Mammary epithelial cell (primary cell): ENCODE measurements at regions of chr1 and their contacts with region 1.

Region 1: DNA sequence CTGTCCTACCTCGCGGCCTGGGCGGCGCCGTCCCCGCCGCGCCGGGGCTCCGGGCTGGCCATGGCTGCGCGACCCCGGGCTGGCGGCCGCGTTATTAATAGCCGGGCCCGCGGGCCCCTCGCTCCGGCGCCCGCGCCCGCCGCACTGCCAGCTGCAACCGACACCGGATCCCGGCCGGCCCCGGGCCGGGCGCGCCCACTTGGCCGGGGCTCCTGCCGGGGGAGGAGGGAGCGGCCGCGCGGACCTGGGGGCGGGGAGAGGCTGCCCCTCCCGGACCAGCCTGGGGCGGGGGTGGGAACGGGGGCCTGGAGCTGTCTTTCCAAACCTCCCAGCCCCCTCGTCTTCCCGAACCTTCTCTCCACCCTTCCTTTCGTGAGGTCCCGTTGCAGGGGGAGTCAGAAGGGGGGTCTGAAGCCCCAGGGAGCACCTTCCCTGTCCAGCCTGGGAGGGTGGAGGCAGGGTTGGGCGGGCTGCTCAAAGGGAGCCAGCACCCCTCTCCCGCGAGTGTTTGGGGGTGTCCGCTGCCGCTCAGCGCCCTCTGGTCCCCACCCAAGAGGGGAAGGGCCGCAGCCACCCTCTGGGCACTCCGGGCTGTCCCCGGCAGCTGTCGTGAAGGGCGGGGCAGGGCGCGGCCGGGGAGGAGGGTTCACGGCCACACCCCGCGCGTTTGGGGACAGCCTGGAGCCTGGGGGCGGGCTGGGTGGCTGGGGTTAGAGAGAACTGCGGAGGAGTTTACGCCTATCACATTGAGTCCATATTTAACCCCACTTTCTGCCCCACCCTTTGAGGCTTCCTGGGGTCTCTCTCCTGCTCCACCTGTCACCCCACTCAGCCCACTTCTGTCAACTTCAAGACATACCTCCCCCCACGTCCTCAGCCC is at the start of gene SYNC:
- DNase-seq: no peak
- H3K4me3 ChIP-seq: peak within 1 kb of the TSS; percentile 59 to 78 (median 68)
- H3K27ac ChIP-seq: no peak within 1 kb of the TSS
- H3K4me1 ChIP-seq: peaks cover 27% of the 10 kb centered on the region
- H3K27me3 ChIP-seq: no peaks in the 10 kb centered on the region
- CTCF ChIP-seq: no peak
- total RNA-seq, gene SYNC: 9.2 to 60.0 TPM

Region 2: GRCh38 chr1:32276032-32276782 is 426.6 kb before region 1 on chr1:
- CTCF ChIA-PET with region 1: no interaction called
- dilution Hi-C with region 1: no loop called
- in situ Hi-C with region 1: no loop called
- intact Hi-C with region 1: no loop called
- DNase-seq: no peak
- H3K4me3 ChIP-seq: no peak overlapping the region
- H3K27ac ChIP-seq: no peak overlapping the region
- H3K4me1 ChIP-seq: peaks cover 13% of the 10 kb centered on the region
- H3K27me3 ChIP-seq: no peaks in the 10 kb centered on the region
- CTCF ChIP-seq: no peak

Region 3: DNA sequence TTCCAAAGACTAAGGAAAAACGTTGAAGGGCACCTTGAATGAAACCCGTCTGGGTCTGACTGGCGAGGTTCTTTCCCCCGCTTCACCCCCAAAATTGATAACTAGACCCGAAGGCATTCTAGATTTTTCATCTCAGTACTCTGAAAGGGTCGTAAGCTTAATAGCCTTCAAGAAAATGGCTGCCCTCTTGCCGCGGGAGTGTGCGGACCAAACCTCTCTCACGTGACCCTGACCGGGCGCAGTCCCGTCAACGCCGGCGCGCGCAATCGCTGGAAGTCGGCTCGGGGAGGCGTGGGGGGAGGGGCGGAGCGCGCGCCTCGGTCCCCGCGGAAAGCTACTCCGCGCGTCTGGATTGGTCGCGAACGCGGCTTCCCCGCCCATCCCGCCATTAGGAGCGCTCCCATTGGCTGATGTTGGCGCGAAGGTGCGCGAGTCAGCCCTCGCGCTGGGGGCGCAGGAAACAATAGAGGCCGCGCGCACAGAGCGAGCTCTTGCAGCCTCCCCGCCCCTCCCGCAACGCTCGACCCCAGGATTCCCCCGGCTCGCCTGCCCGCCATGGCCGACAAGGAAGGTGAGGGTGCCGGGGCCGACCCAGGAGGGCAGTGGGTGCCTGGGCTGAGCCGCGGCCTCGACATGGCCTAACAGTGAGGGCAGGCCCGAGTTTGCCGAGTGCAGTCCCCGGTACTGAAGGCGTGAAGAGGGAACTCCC is 51.9 kb before region 1 on chr1 and contains the start of gene RBBP4:
- CTCF ChIA-PET with region 1: no interaction called
- dilution Hi-C with region 1: loop called (anchors 5 kb)
- in situ Hi-C with region 1: no loop called
- intact Hi-C with region 1: no loop called
- DNase-seq: peak; percentile 98
- H3K4me3 ChIP-seq: peak within 1 kb of the TSS; percentile 94 to 99 (median 99)
- H3K27ac ChIP-seq: peak within 1 kb of the TSS; percentile 99
- H3K4me1 ChIP-seq: peaks cover 20% of the 10 kb centered on the region
- H3K27me3 ChIP-seq: no peaks in the 10 kb centered on the region
- CTCF ChIP-seq: no peak
- total RNA-seq, gene RBBP4: 108 to 110 TPM

Region 4: GRCh38 chr1:32753532-32754312 is 50.9 kb after region 1 on chr1:
- CTCF ChIA-PET with region 1: interaction called, 18 read pairs
- dilution Hi-C with region 1: no loop called
- in situ Hi-C with region 1: no loop called
- intact Hi-C with region 1: no loop called
- DNase-seq: peak; percentile 77
- H3K4me3 ChIP-seq: peak overlapping the region; percentile 42 to 89 (median 65)
- H3K27ac ChIP-seq: no peak overlapping the region
- H3K4me1 ChIP-seq: peaks cover 35% of the 10 kb centered on the region
- H3K27me3 ChIP-seq: no peaks in the 10 kb centered on the region
- CTCF ChIP-seq: no peak

Region 5: GRCh38 chr1:32806910-32807523 is 104.2 kb after region 1 on chr1:
- CTCF ChIA-PET with region 1: no interaction called
- dilution Hi-C with region 1: loop called (anchors 5 kb)
- in situ Hi-C with region 1: no loop called
- intact Hi-C with region 1: no loop called
- DNase-seq: no peak
- H3K4me3 ChIP-seq: no peak overlapping the region
- H3K27ac ChIP-seq: no peak overlapping the region
- H3K4me1 ChIP-seq: no peaks in the 10 kb centered on the region
- H3K27me3 ChIP-seq: no peaks in the 10 kb centered on the region
- CTCF ChIP-seq: no peak

Region 6: DNA sequence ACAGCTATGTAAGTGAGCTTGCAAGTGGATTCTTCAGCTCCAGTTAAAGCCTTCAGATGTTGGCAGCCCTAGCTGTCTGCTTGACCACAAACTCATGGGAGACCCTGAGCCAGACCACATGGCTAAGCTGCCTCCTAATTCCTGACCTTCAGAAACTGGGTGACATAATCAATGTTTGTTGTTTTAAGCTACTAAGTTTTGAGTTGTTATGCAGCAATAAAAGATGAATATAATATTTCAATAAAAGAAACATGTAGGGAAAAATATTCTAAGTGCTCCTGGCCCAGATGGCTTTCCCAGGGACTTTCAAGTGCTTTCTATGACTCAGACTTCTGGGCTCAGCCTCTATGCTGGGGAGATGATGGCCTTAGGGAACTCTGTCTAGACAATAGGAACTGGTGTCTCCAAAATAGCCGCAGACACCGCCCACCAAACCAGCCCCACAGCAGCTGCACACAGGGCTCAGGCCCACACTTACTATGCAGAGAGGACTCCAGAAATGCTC is 357.8 kb after region 1 on chr1:
- CTCF ChIA-PET with region 1: no interaction called
- dilution Hi-C with region 1: no loop called
- in situ Hi-C with region 1: no loop called
- intact Hi-C with region 1: loop called (anchors 10 kb)
- DNase-seq: peak; percentile 94
- H3K4me3 ChIP-seq: no peak overlapping the region
- H3K27ac ChIP-seq: peak overlapping the region; percentile 39
- H3K4me1 ChIP-seq: peaks cover 18% of the 10 kb centered on the region
- H3K27me3 ChIP-seq: no peaks in the 10 kb centered on the region
- CTCF ChIP-seq: no peak